ENCODE measurements at regions of chr6 and their contacts with region 1.

Region 1: DNA sequence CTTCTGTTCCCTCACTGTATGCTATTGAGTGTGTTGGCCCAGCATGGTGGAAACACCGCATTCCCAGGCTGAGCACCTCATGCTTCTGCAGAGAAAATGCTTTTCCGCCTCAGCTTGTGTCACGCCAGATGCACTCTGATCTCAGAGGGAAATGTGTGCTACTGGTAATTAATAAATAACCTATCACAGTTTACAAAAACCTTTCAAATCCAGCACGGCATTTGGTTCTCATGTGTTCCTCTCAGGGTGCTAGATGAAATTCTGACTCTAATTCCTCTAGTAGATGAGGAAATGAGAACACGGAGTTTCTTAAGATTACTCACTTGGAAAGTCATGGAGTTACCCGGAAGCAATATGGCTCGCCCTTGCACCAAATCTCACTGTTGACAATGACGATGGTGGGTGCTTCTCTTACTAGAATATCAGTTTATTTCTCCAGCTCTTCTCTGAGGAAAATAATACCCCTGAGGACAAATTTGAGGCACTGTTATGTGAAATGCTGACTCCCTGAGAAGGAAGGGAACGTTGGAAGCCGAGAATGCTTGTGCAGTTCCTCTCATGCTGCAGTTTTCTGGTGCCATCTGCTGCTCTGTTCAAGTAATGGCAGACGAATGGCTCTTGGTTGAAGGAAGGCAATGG is 116.6 kb downstream of the RNF144B start:
- DNase-seq: no peak
- ATAC-seq: peak; percentile 85

Region 2: GRCh38 chr6:16559071-16559470 is 1944.6 kb before region 1 on chr6:
- intact Hi-C with region 1: no loop called
- DNase-seq: no peak
- ATAC-seq: peak; percentile 47

Region 3: DNA sequence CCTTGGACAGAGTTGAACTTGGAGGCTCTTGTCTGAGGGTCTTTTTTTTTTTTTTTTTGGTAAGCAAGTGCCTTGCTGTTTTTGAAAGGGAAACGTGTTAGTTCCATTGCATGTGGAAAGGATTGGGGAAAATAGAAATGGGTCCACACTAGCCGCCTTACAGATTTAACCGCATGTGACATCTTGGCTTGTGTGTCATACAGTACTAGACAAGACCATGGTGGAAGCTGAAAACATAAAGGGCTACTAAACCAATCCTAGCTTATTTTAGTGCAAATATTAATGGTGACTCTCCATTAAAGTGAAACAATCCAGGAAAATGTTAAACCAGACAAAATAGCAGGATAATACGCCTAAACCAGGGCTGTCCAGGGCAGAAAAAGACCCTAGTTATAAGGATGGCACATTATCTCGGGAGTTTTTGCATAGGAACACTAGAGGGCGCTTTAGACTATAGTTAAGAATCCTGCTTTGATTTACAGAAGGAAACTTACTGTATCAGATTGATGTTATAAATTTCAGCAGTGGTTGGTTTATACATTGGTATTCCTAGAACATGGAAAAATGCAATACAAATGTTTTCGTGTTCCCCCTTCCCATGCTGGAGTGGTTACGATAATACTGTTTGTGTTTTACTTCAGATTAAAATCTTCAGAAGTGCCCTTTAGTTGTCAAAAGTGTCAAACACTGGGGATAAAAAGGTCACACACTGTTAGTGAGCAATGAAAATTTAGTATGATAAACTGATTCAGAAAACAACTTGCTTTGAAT is 179.6 kb before region 1 on chr6:
- intact Hi-C with region 1: loop called (anchors 1 kb)
- DNase-seq: no peak
- ATAC-seq: peak; percentile 73

Region 4: DNA sequence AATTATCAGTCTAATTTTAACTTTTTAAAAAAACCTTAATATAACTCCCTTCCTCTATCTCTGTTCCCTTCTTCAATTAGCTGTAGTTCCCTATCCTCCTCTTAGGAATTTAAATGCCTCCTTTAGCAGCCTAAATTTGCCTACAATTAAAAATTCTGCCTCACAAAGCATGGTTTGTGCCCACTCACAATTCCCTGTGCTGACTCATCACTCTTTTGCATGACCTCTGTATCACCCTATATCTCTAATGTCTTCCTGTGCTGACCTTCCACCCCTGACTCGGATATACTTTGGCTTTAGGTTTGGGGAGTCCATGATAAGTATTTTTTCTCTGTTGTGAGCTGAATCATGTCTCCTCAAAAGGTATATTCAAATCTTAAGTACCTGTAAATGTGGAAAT is 137.0 kb after region 1 on chr6:
- intact Hi-C with region 1: no loop called
- DNase-seq: no peak
- ATAC-seq: no peak